Common myeloid progenitor, CD34-positive (primary cell): ENCODE measurements at regions of chr7 and their contacts with region 1.

Region 1: DNA sequence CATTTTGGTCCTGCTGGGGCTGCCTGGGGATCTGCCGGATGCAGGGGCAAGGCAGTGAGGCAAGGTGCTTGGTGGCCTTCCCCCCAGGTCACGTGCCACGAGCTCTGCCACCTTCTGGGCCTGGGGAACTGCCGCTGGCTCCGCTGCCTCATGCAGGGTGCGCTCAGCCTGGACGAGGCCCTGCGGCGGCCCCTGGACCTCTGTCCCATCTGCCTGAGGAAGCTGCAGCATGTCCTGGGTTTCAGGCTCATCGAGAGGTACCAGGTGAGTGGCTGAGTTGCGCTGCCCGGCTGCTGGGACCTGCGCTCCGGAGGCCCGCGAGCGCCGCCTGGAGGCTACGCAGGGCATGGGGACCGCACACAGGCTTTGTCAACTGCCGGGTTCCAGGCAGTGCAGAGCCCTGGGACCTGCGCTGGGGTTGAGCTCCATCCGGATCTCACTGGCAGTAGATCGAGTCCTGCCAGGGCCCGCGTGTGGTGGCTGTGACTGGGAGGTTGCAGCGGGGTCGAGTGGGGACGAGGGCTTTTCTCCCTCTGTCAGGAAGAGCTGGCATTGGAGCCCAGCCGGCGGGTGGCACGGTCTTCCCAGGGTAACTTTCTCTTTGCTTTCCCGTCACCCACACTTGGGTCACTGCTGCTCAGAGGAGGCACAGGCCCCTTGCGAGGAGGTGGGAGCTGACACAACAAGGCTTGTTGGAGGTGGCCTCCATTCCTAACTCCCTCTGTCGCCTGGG is 21.7 kb downstream of the AMZ1 start:
- DNase-seq: peak; percentile 74 to 90 (median 87)
- H3K4me3 ChIP-seq: peak overlapping the region in 2 of 7 experiments; percentile 36 to 65
- H3K27ac ChIP-seq: no peak overlapping the region
- H3K4me1 ChIP-seq: peaks cover 0 to 64% (median 54%) of the 10 kb centered on the region in 4 experiments
- H3K27me3 ChIP-seq: no peaks in the 10 kb centered on the region

Region 2: DNA sequence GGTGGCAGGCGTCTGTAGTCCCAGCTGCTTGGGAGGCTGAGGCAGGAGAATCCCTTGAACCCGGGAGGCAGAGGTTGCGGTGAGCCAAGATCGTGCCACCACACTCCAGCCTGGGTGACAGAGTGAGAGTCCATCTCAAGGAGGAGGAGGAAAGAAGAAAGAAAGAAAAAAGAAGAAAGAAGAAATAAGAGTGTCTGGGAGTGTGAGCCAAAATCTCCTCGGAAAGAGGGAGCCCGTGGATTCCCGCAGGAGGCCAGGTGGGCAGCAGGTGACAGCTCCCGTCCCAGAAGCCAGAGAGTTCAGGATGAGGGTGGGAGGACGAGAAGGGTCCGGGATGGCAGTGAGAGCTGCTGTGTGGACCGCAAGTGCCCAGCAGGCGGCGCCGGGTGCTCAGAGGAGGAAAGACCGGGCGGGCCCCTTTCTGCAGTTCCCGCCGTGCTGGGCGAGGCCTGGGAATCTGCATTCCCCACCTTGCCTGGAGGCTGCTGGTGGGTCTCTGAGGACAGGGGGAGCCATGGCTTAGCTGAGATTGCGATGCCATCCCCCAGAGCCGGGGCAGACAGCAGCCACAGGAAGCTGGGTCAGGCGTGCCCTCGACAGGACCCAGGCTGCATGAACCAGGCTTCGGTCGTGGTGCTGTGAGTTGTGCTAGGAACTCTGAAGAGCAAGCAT is 38.9 kb before region 1 on chr7:
- CTCF ChIA-PET with region 1: interaction called, 307 read pairs
- POLR2A ChIA-PET with region 1: no interaction called
- DNase-seq: peak; percentile 65 to 75 (median 71)
- H3K4me3 ChIP-seq: no peak overlapping the region
- H3K27ac ChIP-seq: no peak overlapping the region
- H3K4me1 ChIP-seq: peaks cover 0 to 6% (median 4%) of the 10 kb centered on the region in 4 experiments
- H3K27me3 ChIP-seq: no peaks in the 10 kb centered on the region

Region 3: GRCh38 chr7:2680792-2681490 is 28.8 kb before region 1 on chr7:
- CTCF ChIA-PET with region 1: interaction called, 307 read pairs
- POLR2A ChIA-PET with region 1: no interaction called
- DNase-seq: peak; percentile 49 to 67 (median 60)
- H3K4me3 ChIP-seq: no peak overlapping the region
- H3K27ac ChIP-seq: no peak overlapping the region
- H3K4me1 ChIP-seq: peaks cover 0 to 4% (median 1%) of the 10 kb centered on the region in 4 experiments
- H3K27me3 ChIP-seq: peaks cover 0 to 2% (median 0%) of the 10 kb centered on the region in 5 experiments

Region 4: DNA sequence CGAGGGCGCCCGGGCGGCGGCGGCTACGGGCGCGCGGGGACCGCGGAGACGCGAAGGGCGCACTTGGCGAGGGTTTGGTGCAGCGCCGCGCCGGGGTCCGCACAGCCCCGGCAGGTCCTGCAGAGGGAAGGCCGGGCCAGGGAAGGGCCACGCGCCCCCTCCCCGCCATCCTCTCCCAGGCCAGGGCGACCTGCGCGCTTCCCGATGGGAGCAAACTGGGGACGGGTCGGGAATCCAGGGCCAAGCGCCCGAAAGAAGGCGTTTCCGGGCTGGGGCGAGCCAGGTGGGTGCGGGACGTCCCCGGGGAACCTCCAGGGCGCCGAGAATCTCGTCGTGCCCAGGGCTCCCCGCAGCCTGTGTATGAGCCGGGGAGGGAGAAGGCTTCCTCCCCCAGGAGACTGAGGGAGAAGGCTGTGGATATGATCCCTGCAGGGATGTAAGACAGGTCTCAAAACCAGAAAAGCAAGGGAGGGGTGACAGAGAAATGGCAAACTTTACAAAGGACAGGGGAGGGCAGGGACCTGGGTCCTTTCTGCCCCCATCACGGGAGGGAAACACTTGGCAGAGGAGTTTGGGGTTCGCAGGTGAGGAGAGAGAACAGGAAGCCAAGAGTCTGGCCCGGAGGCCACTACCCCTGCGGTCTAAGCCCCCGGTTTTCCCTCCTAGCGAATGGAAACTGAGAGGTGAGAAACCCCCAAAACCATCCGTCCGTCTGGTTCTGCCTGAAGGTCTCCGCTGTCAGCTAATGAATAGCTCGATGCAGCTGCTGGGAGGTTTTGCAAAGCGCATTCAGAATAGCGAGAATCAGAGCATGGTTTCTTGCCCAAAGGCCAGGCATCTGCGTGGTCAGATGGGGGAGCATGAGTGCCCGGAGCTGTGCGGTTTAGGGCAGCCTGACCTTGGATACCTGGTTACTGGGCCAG is 21.0 kb before region 1 on chr7:
- CTCF ChIA-PET with region 1: interaction called, 64 read pairs
- POLR2A ChIA-PET with region 1: interaction called, 6 read pairs
- DNase-seq: peak in 2 of 3 donors; percentile 37 to 52
- H3K4me3 ChIP-seq: peak overlapping the region in 6 of 7 experiments; percentile 10 to 61 (median 44)
- H3K27ac ChIP-seq: no peak overlapping the region
- H3K4me1 ChIP-seq: peaks cover 0 to 38% (median 27%) of the 10 kb centered on the region in 4 experiments
- H3K27me3 ChIP-seq: peaks cover 0 to 44% (median 16%) of the 10 kb centered on the region in 5 experiments

Region 5: GRCh38 chr7:2698581-2699288 is 11.0 kb before region 1 on chr7:
- CTCF ChIA-PET with region 1: interaction called, 106 read pairs
- POLR2A ChIA-PET with region 1: interaction called, 21 read pairs
- DNase-seq: peak; percentile 94 to 99 (median 99)
- H3K4me3 ChIP-seq: peak overlapping the region in 2 of 7 experiments; percentile 14 to 42
- H3K27ac ChIP-seq: peak overlapping the region; percentile 77 to 86
- H3K4me1 ChIP-seq: peaks cover 0 to 58% (median 30%) of the 10 kb centered on the region in 4 experiments
- H3K27me3 ChIP-seq: no peaks in the 10 kb centered on the region

Region 6: GRCh38 chr7:2720582-2721491 is 11.1 kb after region 1 on chr7:
- CTCF ChIA-PET with region 1: interaction called, 441 read pairs
- POLR2A ChIA-PET with region 1: interaction called, 5 read pairs
- DNase-seq: peak; percentile 85 to 89 (median 86)
- H3K4me3 ChIP-seq: peak overlapping the region in 1 of 7 experiments; percentile 9
- H3K27ac ChIP-seq: peak overlapping the region in 1 of 2 experiments; percentile 43
- H3K4me1 ChIP-seq: peaks cover 4 to 65% (median 58%) of the 10 kb centered on the region in 4 experiments
- H3K27me3 ChIP-seq: no peaks in the 10 kb centered on the region

Region 7: GRCh38 chr7:2732959-2733584 is 23.4 kb after region 1 on chr7:
- CTCF ChIA-PET with region 1: interaction called, 441 read pairs
- POLR2A ChIA-PET with region 1: interaction called, 11 read pairs
- DNase-seq: peak in 2 of 3 donors; percentile 48 to 60
- H3K4me3 ChIP-seq: peak overlapping the region in 2 of 7 experiments; percentile 27 to 32
- H3K27ac ChIP-seq: peak overlapping the region; percentile 98 to 99
- H3K4me1 ChIP-seq: peaks cover 17 to 100% (median 89%) of the 10 kb centered on the region in 4 experiments
- H3K27me3 ChIP-seq: no peaks in the 10 kb centered on the region

Region 8: GRCh38 chr7:2824678-2825461 is 115.2 kb after region 1 on chr7:
- CTCF ChIA-PET with region 1: no interaction called
- POLR2A ChIA-PET with region 1: no interaction called
- DNase-seq: no peak
- H3K4me3 ChIP-seq: no peak overlapping the region
- H3K27ac ChIP-seq: no peak overlapping the region
- H3K4me1 ChIP-seq: peaks cover 5 to 44% (median 38%) of the 10 kb centered on the region in 4 experiments
- H3K27me3 ChIP-seq: no peaks in the 10 kb centered on the region